ENCODE measurements at regions of chr18 and their contacts with region 1.

Region 1: GRCh38 chr18:35642802-35643201 is 61.3 kb downstream of the GALNT1 start:
- DNase-seq: no peak
- ATAC-seq: no peak
- H3K4me3 ChIP-seq: no peak overlapping the region
- H3K4me3 Mint-ChIP-seq: no peak overlapping the region
- H3K27ac ChIP-seq: no peak overlapping the region
- H3K27ac Mint-ChIP-seq: no peak overlapping the region
- H3K4me1 ChIP-seq: no peaks in the 10 kb centered on the region
- H3K4me1 Mint-ChIP-seq: peaks cover 8% of the 10 kb centered on the region
- H3K27me3 ChIP-seq: no peaks in the 10 kb centered on the region
- H3K27me3 Mint-ChIP-seq: no peaks in the 10 kb centered on the region
- CTCF ChIP-seq: no peak

Region 2: GRCh38 chr18:35361570-35362321 is 281.1 kb before region 1 on chr18:
- CTCF ChIA-PET with region 1: no interaction called
- POLR2A ChIA-PET with region 1: no interaction called
- intact Hi-C with region 1: no loop called
- DNase-seq: no peak
- ATAC-seq: no peak
- H3K4me3 ChIP-seq: no peak overlapping the region
- H3K4me3 Mint-ChIP-seq: no peak overlapping the region
- H3K27ac ChIP-seq: no peak overlapping the region
- H3K27ac Mint-ChIP-seq: no peak overlapping the region
- H3K4me1 ChIP-seq: no peaks in the 10 kb centered on the region
- H3K4me1 Mint-ChIP-seq: no peaks in the 10 kb centered on the region
- H3K27me3 ChIP-seq: no peaks in the 10 kb centered on the region
- H3K27me3 Mint-ChIP-seq: peaks cover 3% of the 10 kb centered on the region
- CTCF ChIP-seq: no peak

Region 3: GRCh38 chr18:35478520-35479435 is 164.0 kb before region 1 on chr18:
- CTCF ChIA-PET with region 1: no interaction called
- POLR2A ChIA-PET with region 1: no interaction called
- intact Hi-C with region 1: loop called in 1 of 2 experiments (anchors 10 kb)
- DNase-seq: peak in 2 of 9 experiments; percentile 21 to 43
- ATAC-seq: peak; percentile 31
- H3K4me3 ChIP-seq: no peak overlapping the region
- H3K4me3 Mint-ChIP-seq: no peak overlapping the region
- H3K27ac ChIP-seq: no peak overlapping the region
- H3K27ac Mint-ChIP-seq: no peak overlapping the region
- H3K4me1 ChIP-seq: no peaks in the 10 kb centered on the region
- H3K4me1 Mint-ChIP-seq: peaks cover 6% of the 10 kb centered on the region
- H3K27me3 ChIP-seq: no peaks in the 10 kb centered on the region
- H3K27me3 Mint-ChIP-seq: no peaks in the 10 kb centered on the region
- CTCF ChIP-seq: no peak

Measured in CD8-positive, alpha-beta T cell (primary cell).